ENCODE measurements at regions of chr1 and their contacts with region 1.

Region 1: GRCh38 chr1:19485362-19486187 is at the start of gene CAPZB:
- DNase-seq: peak; percentile 99
- total RNA-seq, gene CAPZB: 255 to 277 TPM

Region 2: GRCh38 chr1:19398309-19398760 is 87.2 kb before region 1 on chr1:
- intact Hi-C with region 1: loop called in 1 of 2 experiments (anchors 5 kb)
- DNase-seq: peak; percentile 87

Region 3: DNA sequence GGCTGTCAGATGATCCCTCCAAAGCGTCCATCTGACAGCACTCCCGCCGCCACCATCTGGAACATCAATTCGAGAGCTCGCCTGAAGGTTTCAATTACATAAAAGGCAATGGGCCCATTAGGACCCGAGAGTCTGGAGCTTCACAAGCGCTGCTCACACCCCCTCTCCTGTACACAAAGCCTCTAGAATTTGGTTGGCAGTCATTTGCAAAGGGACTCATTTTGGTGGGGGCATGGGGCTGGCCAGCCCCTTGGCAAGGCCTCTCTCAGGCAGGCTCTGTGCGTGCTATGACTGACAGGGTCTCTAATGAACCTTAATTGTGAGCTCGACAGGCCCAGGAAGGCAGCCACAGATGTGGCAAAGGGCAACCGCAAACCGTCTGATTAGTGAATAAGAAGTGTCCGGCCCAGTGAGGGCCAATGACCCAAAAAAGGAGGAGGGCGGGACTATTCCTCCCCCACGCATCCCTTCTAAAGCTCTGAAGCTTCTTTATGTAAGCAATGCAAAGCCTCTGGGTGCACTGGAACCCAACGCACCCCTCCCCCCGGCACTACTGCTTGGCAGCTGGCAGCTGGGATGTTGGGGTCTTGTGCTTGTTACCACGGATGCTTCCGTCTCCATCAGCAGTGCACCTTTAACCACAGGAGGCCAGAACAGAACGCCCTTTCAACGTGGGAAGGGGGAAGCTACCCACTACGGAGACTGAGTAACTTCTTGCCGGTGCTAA is 79.7 kb before region 1 on chr1:
- intact Hi-C with region 1: loop called in 1 of 2 experiments (anchors 5 kb)
- DNase-seq: no peak

Region 4: DNA sequence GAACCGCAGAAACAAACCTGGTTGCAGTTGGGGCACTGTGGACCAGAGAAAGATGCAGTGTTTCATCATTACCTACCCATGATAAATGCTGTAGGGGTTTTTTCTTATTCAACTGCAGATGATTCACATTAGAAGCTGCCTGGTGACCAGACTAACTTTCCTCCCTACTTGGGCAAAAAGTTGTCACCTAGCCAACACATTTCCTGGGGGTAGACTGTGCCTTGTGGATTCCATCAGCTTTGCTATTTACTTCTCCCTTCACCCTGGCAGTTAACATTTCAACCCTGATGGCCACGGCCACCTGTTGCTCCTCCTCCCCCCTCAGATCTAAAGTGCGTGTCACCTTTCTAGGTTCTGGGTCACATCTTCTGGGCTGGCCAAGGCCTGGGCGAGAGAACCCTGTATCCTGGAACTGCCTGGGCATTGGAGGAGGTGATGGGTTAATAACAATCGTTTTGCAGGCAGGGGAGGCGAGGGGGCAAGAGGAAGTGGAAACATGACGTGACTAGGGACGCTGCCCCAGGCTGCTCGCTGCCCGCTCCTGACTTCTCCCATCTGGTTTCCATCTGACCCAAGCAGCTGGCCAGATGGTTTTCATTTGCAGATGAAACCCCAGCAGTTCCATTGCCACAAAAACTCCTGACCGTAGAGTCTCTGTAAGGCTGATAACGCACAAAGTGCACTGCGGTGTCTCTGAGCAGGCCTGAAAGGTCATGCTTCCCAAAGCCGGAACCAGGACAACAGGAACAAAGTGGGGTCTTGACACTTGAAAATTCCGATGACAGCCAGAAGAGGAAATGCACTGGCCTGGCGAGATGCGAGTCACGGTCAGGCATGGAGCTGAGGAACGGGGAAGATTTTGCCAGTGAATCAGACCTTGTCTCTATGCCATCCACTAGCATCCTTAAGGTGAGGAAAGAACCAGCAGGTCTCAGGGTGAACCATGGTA is 36.8 kb before region 1 on chr1:
- intact Hi-C with region 1: loop called in 1 of 2 experiments (anchors 5 kb)
- DNase-seq: peak; percentile 88

Region 5: DNA sequence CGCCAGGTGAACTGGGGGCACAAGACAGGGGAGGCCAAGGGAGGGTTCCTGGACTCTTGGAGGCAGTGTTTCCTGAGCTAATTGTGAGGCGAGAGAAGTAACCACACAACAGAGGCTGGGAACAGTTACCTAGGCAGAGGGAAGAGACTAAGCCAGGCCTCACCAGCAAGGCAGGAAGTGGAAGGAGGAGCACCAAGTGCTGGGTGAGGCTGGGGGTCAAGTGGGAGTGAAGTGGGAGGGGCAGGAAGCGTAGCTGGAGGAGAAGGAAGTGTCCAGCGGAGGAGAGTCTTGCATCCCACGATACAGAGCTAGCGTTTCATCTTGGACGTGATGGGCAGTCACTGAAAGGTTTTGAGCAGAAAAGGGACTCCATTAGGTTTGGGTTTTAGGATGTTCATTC is 48.1 kb after region 1 on chr1:
- intact Hi-C with region 1: no loop called
- DNase-seq: no peak

Region 6: GRCh38 chr1:19643602-19644394 is 158.2 kb after region 1 on chr1 and contains the start of gene NBL1:
- intact Hi-C with region 1: loop called (anchors 5 kb)
- DNase-seq: peak; percentile 92
- total RNA-seq, gene NBL1: 137 to 186 TPM